ENCODE measurements at regions of chr10 and their contacts with region 1.

Region 1: DNA sequence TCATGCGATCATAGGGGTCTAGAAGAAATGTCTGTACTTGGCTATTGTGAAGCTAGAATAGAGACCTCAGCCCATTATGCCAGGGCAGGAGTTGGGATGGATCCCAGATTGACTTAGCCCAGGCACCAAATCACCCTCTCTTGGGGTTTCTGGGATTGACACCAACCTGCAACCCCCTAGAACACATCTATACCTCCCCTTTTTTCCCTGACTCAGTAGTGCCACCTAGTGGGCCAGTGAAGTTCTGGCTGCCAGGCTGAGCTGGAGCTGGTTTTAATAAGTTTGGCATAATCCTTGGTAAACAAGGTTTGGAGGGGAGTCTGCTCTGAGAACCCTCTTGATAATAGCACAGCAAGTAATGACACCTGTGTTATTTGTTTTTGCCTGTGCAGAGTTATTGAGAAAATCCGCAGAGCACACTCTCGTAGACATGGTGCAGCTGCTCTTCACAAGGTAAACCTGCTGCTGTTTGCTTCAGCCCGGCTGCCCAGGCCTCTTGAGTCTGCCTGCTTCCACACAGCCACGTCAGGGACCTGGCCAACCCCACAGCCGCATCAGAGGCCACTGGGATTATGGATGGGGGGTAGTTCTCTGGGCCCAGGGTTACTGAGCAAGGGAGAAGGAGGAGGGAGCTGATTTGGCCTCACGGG is 43.3 kb upstream of the NFKB2 start:
- DNase-seq: peak in 4 of 5 donors; percentile 61 to 81 (median 72)
- H3K4me3 ChIP-seq: no peak overlapping the region
- H3K27ac ChIP-seq: no peak overlapping the region
- H3K4me1 ChIP-seq: no peaks in the 10 kb centered on the region
- H3K27me3 ChIP-seq: no peaks in the 10 kb centered on the region
- CTCF ChIP-seq: peak; percentile 93

Region 2: GRCh38 chr10:102033787-102034186 is 318.4 kb before region 1 on chr10:
- intact Hi-C with region 1: no loop called
- DNase-seq: no peak
- H3K4me3 ChIP-seq: no peak overlapping the region
- H3K27ac ChIP-seq: no peak overlapping the region
- H3K4me1 ChIP-seq: no peaks in the 10 kb centered on the region
- H3K27me3 ChIP-seq: no peaks in the 10 kb centered on the region
- CTCF ChIP-seq: no peak

Region 3: GRCh38 chr10:102229810-102230263 is 122.4 kb before region 1 on chr10:
- intact Hi-C with region 1: loop called (anchors 5 kb)
- DNase-seq: peak; percentile 88 to 93 (median 90)
- H3K4me3 ChIP-seq: peak overlapping the region in 2 of 3 donors; percentile 28 to 44
- H3K27ac ChIP-seq: no peak overlapping the region
- H3K4me1 ChIP-seq: peaks cover 2 to 19% (median 5%) of the 10 kb centered on the region in 3 donors
- H3K27me3 ChIP-seq: peaks cover 3% of the 10 kb centered on the region
- CTCF ChIP-seq: peak; percentile 99

Measured in kidney (tissue), 22 donors.